Posterior vena cava (tissue), 2 donors: ENCODE measurements at regions of chr11 and their contacts with region 1.

Region 1: DNA sequence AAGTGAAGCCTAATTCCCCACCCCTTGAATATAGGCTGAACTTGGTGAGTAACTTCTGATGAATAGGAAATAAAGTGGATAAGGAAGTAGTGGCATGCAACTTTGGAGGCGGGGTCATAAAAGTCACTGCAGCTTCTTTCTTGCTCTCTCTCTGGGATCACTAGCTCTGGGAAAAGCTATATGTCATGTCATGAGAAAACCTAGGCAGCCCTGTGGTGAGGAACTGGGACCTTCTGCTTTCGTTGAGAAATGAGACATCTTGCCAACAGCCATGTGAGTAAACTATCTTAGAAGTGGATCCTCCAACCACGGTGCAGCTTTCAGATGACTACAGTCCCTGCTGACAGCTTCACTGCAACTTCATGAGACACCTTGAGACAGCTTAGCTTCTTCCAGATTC is 15.7 kb downstream of the ZNF214 start:
- DNase-seq: no peak

Region 2: DNA sequence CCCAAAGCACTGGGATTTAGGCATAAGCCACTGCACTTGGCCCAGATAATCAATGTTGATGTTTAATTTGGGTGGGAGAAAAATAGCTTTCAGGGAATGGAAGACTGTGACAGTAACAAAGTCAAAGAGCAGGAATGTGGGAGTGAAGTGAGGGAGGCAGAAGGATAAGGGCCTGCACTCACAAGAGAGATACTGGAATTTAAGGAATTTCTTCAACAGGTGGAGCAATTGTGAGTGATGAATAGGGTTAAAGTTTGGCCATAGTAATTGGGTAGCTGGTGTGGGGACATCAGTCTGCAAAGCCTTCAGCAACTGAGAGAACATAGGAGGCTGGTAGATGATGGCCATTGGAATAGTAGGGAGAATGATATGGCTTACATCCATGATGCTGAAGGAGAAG is 577.0 kb before region 1 on chr11:
- intact Hi-C with region 1: loop called in 1 of 2 experiments (anchors 5 kb)
- DNase-seq: no peak